ENCODE measurements at regions of chr1 and their contacts with region 1.

Region 1: DNA sequence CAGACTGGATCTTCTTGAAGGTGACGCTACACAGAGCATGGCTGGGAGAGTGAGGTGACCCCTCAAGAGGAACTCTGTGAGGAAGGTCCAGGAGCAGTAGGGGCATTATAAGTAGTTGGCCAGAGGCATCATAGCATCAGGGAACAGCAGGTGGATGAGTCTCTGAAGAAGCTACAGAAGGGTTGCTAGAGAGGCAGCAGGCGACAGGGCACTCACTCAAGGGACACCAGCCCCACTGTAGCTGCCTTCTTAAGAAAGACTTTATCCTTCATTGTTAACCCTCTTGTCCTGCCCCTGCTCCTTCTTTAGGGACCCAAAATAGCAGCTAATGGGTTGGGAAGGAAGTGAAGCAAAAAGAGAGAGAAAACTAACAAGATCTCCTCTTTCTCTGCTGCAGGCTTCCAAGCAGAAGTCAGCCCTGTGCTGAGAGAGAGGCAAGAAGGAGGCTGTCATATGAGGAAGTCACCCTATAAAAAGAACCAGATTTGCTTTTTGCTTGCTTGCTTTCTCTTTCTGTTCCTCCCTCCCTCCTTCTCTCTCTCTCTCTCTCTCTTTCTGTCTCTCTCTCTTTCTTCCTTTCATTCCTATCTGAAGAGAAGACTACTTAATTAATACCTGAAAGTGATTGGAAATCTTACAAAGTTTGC is 7.7 kb upstream of the CD5L start:
- DNase-seq: no peak
- ATAC-seq: peak; percentile 87
- H3K4me3 Mint-ChIP-seq: peak overlapping the region; percentile 81
- H3K27ac Mint-ChIP-seq: peak overlapping the region; percentile 94
- H3K4me1 Mint-ChIP-seq: peaks cover 64% of the 10 kb centered on the region
- H3K27me3 Mint-ChIP-seq: no peaks in the 10 kb centered on the region
- CTCF ChIP-seq: no peak

Region 2: DNA sequence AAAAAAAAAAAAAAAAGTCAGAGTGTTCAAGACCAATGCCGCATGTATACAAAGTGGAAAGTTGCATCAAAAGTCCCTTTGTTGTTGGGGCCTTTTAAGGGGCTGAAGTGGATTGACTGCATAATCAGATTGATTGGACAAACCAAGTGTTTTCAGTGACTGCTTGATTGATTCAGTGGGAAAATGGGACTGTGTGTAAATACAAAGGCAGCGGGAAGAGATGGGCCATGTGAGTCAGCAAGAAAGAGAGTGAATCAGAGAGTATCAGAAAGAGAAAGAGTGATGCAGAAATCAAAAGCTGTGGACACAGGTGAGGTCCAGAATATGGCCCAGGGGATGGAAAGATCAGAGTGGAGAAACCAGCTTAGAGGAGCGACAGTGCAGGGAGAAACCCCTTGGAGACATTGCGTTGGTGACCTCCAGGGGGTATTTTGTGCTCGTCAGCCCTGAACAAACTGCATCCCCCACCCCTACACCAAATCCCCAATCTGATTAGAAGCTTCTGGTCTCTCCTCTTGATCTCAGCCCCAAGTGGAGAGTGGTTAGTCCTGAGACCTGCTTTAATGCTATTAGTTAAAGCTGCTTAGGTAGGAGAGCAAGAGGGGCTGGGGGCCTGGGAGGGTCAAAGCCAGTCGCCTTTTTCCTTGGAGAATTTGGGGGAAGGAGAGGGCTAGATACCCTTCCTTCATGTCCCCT is 744.6 kb before region 1 on chr1:
- CTCF ChIA-PET with region 1: no interaction called
- POLR2A ChIA-PET with region 1: no interaction called
- intact Hi-C with region 1: no loop called
- DNase-seq: no peak
- ATAC-seq: no peak
- H3K4me3 Mint-ChIP-seq: no peak overlapping the region
- H3K27ac Mint-ChIP-seq: no peak overlapping the region
- H3K4me1 Mint-ChIP-seq: peaks cover 26% of the 10 kb centered on the region
- H3K27me3 Mint-ChIP-seq: peaks cover 29% of the 10 kb centered on the region
- CTCF ChIP-seq: no peak

Region 3: DNA sequence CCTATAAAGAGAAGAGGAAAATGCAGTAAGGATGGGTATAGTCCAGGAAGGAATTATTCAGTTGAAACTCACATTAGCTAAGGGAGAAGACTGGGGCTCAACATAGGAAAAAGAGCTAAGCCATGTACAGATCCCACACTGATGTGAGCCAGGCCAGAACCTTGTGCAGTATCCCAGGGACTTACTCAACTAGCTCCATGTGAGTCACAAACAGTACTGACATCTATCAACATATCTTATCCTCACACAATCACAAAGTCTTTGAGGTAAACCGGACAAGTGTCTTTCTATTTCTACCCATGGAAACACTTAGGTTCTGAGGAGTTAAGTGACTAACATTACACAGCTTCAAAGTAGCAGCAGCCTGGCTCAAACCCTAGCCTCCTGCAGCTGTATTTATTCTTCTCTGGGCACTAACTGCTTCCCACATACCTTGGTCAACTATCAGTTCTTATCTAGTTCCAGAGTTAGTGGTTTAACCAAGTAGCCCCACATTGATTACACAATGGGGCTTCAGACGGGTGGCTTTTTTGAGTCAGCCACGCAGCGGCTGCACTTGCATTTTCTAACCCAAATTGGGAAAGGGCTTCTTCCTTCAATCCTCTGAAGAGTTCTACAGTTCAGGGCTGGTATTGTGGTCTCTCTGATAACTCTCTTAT is 17.3 kb before region 1 on chr1:
- CTCF ChIA-PET with region 1: interaction called, 3 read pairs
- POLR2A ChIA-PET with region 1: interaction called, 12 read pairs
- intact Hi-C with region 1: loop called (anchors 2 kb)
- DNase-seq: no peak
- ATAC-seq: no peak
- H3K4me3 Mint-ChIP-seq: no peak overlapping the region
- H3K27ac Mint-ChIP-seq: no peak overlapping the region
- H3K4me1 Mint-ChIP-seq: peaks cover 50% of the 10 kb centered on the region
- H3K27me3 Mint-ChIP-seq: no peaks in the 10 kb centered on the region
- CTCF ChIP-seq: no peak

Region 4: DNA sequence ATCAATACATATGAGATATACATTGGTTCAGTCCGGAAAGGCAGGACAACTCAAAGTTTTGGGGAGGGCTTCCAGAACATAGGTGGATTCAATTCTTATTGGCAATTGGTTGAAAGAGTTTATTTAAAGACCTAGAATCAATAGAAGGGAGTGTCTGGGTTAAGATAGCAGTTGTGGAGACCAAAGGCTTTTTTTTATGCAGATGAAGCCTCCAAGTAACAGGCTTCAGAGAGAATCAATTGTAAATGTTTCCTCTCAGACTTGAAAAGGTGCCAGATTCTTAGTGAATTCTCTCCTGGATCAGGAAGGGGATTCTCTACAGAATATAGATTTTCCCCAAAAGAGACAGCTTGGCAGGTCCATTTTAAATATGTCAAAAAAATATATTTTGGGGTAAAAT is 19.3 kb after region 1 on chr1:
- CTCF ChIA-PET with region 1: no interaction called
- POLR2A ChIA-PET with region 1: no interaction called
- intact Hi-C with region 1: loop called (anchors 2 kb)
- DNase-seq: no peak
- ATAC-seq: no peak
- H3K4me3 Mint-ChIP-seq: no peak overlapping the region
- H3K27ac Mint-ChIP-seq: no peak overlapping the region
- H3K4me1 Mint-ChIP-seq: peaks cover 12% of the 10 kb centered on the region
- H3K27me3 Mint-ChIP-seq: no peaks in the 10 kb centered on the region
- CTCF ChIP-seq: no peak

Measured in activated B cell treated with CpG ODN at 0.5 μM for 24 hours (primary cell).